ENCODE measurements at regions of chr3 and their contacts with region 1.

Region 1: DNA sequence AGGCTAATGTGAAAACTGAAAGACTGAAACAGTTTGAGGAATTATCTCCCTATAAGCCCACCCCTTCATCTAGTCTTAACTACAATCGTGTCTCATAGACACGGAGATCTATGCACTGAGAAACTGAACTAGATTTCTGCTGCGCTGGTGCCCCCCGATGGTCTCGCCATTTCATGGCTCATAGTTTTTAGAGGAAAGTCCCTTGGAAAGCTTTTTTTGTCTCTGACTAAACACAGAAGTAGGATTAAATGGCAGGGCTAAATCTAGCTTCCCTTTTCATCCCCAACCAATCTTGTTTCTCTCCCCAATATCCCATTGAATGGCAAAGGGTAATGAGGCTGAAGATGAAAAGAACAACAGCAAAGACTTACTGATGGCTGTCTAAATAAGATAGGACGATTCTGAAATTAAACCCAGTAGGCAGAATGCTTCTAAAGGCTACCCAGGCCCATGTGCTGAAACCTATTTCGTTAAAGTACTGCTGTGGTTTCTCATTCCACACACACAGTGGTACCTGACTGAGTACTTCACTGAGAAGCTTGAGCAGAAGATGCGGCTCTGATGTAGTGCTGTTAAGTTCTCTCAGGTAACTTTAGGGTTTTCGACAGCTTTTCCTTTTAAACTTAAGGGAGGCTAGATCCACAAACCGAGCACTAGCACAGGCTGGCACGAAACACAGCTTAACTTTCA is 142.7 kb downstream of the GADL1 start:
- DNase-seq: peak; percentile 57
- ATAC-seq: peak; percentile 51
- H3K4me3 ChIP-seq: no peak overlapping the region
- H3K4me3 Mint-ChIP-seq: no peak overlapping the region
- H3K27ac ChIP-seq: no peak overlapping the region
- H3K27ac Mint-ChIP-seq: no peak overlapping the region
- H3K4me1 ChIP-seq: peaks cover 0 to 6% of the 10 kb centered on the region in 2 donors
- H3K4me1 Mint-ChIP-seq: peaks cover 6% of the 10 kb centered on the region
- H3K27me3 ChIP-seq: no peaks in the 10 kb centered on the region
- H3K27me3 Mint-ChIP-seq: no peaks in the 10 kb centered on the region
- CTCF ChIP-seq: peak; percentile 30

Region 2: GRCh38 chr3:30012941-30013543 is 738.7 kb before region 1 on chr3:
- CTCF ChIA-PET with region 1: interaction called, 10 read pairs
- POLR2A ChIA-PET with region 1: no interaction called
- intact Hi-C with region 1: loop called (anchors 1 kb)
- DNase-seq: peak; percentile 50
- ATAC-seq: no peak
- H3K4me3 ChIP-seq: no peak overlapping the region
- H3K4me3 Mint-ChIP-seq: no peak overlapping the region
- H3K27ac ChIP-seq: no peak overlapping the region
- H3K27ac Mint-ChIP-seq: no peak overlapping the region
- H3K4me1 ChIP-seq: no peaks in the 10 kb centered on the region
- H3K4me1 Mint-ChIP-seq: no peaks in the 10 kb centered on the region
- H3K27me3 ChIP-seq: no peaks in the 10 kb centered on the region
- H3K27me3 Mint-ChIP-seq: peaks cover 10% of the 10 kb centered on the region
- CTCF ChIP-seq: peak; percentile 72

Region 3: DNA sequence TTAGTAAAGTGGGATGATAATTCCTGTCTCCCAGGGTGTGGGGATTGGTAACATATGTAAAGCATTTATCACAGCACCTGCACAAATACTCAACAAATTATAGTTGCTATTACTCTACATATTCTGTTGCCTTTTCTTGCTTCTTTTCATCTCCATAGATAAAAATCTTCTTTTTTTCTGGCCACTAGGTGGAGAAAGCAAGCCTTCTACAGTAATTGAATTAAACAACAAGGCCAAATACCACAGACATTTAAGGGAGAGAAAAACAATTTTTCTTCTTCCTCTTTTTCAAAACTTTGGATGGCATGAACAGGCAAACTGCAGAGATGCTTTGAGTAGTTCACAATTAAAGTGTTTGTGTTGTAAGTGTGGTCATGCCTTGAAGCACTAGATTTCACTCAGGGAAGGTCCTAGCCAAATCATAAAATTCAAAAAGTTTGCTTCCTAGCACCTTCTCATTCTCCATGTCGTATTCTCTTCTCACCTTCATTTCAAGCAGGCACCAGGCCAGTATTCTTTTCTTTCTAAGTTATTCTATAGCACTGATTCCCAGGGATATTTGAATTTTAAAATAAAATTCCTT is 638.8 kb before region 1 on chr3:
- CTCF ChIA-PET with region 1: interaction called, 9 read pairs
- POLR2A ChIA-PET with region 1: no interaction called
- intact Hi-C with region 1: loop called (anchors 1 kb)
- DNase-seq: peak; percentile 58
- ATAC-seq: peak; percentile 41
- H3K4me3 ChIP-seq: no peak overlapping the region
- H3K4me3 Mint-ChIP-seq: no peak overlapping the region
- H3K27ac ChIP-seq: no peak overlapping the region
- H3K27ac Mint-ChIP-seq: no peak overlapping the region
- H3K4me1 ChIP-seq: no peaks in the 10 kb centered on the region
- H3K4me1 Mint-ChIP-seq: peaks cover 6% of the 10 kb centered on the region
- H3K27me3 ChIP-seq: no peaks in the 10 kb centered on the region
- H3K27me3 Mint-ChIP-seq: no peaks in the 10 kb centered on the region
- CTCF ChIP-seq: peak; percentile 73

Region 4: GRCh38 chr3:30401971-30402370 is 349.8 kb before region 1 on chr3:
- CTCF ChIA-PET with region 1: no interaction called
- POLR2A ChIA-PET with region 1: no interaction called
- intact Hi-C with region 1: no loop called
- DNase-seq: no peak
- ATAC-seq: no peak
- H3K4me3 ChIP-seq: no peak overlapping the region
- H3K4me3 Mint-ChIP-seq: no peak overlapping the region
- H3K27ac ChIP-seq: no peak overlapping the region
- H3K27ac Mint-ChIP-seq: no peak overlapping the region
- H3K4me1 ChIP-seq: no peaks in the 10 kb centered on the region
- H3K4me1 Mint-ChIP-seq: peaks cover 10% of the 10 kb centered on the region
- H3K27me3 ChIP-seq: no peaks in the 10 kb centered on the region
- H3K27me3 Mint-ChIP-seq: no peaks in the 10 kb centered on the region
- CTCF ChIP-seq: no peak

Region 5: DNA sequence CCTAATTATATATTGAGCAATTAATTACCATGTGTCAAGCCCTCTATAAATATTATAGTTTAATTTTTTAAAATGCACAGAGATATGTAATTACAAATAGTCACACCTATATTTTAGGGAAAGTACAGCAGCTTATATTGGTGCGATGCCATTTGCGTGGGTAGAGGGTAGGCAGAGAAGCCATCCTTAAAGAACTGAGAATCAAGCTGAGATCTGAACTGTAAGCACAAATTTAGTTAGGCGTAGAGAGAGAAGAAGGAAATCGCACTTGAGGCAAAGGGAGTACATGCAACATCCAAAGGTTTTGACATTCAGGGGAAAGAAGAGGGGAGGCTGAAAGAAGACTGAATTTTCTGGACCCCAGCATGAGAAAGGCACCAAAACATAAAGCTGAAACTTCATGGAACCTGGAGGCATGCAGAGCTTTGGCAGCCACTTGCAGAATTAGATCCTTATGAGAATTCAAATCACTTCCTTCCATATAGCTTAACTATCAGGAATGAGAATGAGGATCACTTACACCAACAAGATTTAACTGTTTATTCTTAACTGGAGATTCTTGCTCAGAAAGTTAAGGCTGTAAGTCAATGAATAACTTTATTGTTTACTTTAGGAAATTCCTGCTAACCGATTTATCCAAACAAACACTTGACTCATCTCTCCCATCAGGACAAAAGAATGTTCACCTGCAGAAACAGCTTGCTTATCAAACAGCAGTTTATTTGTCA is 31.0 kb before region 1 on chr3:
- CTCF ChIA-PET with region 1: no interaction called
- POLR2A ChIA-PET with region 1: no interaction called
- intact Hi-C with region 1: no loop called
- DNase-seq: no peak
- ATAC-seq: no peak
- H3K4me3 ChIP-seq: no peak overlapping the region
- H3K4me3 Mint-ChIP-seq: no peak overlapping the region
- H3K27ac ChIP-seq: no peak overlapping the region
- H3K27ac Mint-ChIP-seq: no peak overlapping the region
- H3K4me1 ChIP-seq: peaks cover 4 to 10% of the 10 kb centered on the region in 2 donors
- H3K4me1 Mint-ChIP-seq: peaks cover 9% of the 10 kb centered on the region
- H3K27me3 ChIP-seq: no peaks in the 10 kb centered on the region
- H3K27me3 Mint-ChIP-seq: peaks cover 9% of the 10 kb centered on the region
- CTCF ChIP-seq: no peak

Measured in B cell (primary cell).